Colonic mucosa (tissue), 4 donors: ENCODE measurements at regions of chr17 and their contacts with region 1.

Region 1: GRCh38 chr17:17496189-17497064 is at the start of gene RASD1:
- DNase-seq: peak; percentile 92
- H3K4me3 ChIP-seq: peak within 1 kb of the TSS; percentile 46
- H3K27ac ChIP-seq: peak within 1 kb of the TSS; percentile 10
- H3K4me1 ChIP-seq: peaks cover 14% of the 10 kb centered on the region
- H3K27me3 ChIP-seq: peaks cover 8% of the 10 kb centered on the region
- CTCF ChIP-seq: peak; percentile 97
- total RNA-seq, gene RASD1: 21.6 to 24.9 TPM

Region 2: GRCh38 chr17:17313350-17313991 is 183.0 kb before region 1 on chr17:
- intact Hi-C with region 1: no loop called
- DNase-seq: peak; percentile 59
- H3K4me3 ChIP-seq: no peak overlapping the region
- H3K27ac ChIP-seq: no peak overlapping the region
- H3K4me1 ChIP-seq: no peaks in the 10 kb centered on the region
- H3K27me3 ChIP-seq: no peaks in the 10 kb centered on the region
- CTCF ChIP-seq: peak; percentile 49

Region 3: GRCh38 chr17:17356149-17356930 is 140.1 kb before region 1 on chr17:
- intact Hi-C with region 1: loop called (anchors 5 kb)
- DNase-seq: peak; percentile 76
- H3K4me3 ChIP-seq: no peak overlapping the region
- H3K27ac ChIP-seq: no peak overlapping the region
- H3K4me1 ChIP-seq: no peaks in the 10 kb centered on the region
- H3K27me3 ChIP-seq: no peaks in the 10 kb centered on the region
- CTCF ChIP-seq: peak; percentile 99

Region 4: GRCh38 chr17:17568749-17569195 is 72.3 kb after region 1 on chr17:
- intact Hi-C with region 1: loop called (anchors 2 kb)
- DNase-seq: peak; percentile 90
- H3K4me3 ChIP-seq: no peak overlapping the region
- H3K27ac ChIP-seq: no peak overlapping the region
- H3K4me1 ChIP-seq: peaks cover 11% of the 10 kb centered on the region
- H3K27me3 ChIP-seq: no peaks in the 10 kb centered on the region
- CTCF ChIP-seq: peak; percentile 68

Region 5: GRCh38 chr17:17580662-17581470 is 84.4 kb after region 1 on chr17:
- intact Hi-C with region 1: no loop called
- DNase-seq: no peak
- H3K4me3 ChIP-seq: no peak overlapping the region
- H3K27ac ChIP-seq: no peak overlapping the region
- H3K4me1 ChIP-seq: no peaks in the 10 kb centered on the region
- H3K27me3 ChIP-seq: no peaks in the 10 kb centered on the region
- CTCF ChIP-seq: no peak

Region 6: DNA sequence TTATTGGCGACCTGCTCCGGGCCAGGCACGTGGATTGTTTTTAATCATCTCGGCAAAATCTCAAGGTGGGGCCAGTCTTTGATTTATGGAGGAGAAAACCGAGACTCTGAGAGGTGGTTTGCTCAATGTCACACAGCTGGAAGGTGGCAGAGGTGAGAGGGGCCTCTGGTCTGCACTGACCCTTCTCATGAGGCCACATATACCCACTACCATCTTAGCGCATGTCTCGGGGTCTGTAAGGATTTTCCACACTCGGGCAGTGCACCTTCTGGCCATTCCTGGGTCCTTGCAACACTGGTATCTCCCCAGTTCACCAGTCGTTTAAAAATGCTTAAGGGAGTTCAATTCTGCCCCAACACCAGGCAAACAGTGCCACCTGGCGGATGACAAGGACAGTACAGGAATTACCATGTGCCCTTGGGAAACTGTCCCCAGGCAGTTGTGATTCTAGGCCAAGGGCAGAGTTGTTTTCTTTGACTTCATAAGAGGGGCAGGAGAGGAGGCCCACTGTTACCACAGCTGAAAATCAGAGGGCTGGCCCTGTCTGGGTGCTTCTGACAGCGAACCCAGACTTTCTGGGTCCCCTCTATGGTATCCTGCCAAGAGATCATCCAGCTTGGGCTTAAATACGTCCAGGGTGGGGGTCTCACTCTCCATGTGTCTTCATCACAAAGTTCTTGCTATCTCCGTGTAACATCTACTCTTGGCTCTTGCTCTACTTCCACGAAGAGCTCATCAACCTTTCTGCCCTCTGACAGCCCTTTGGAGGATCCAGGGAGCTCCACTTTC is 145.4 kb after region 1 on chr17:
- intact Hi-C with region 1: loop called (anchors 10 kb)
- DNase-seq: peak; percentile 83
- H3K4me3 ChIP-seq: no peak overlapping the region
- H3K27ac ChIP-seq: no peak overlapping the region
- H3K4me1 ChIP-seq: no peaks in the 10 kb centered on the region
- H3K27me3 ChIP-seq: no peaks in the 10 kb centered on the region
- CTCF ChIP-seq: peak; percentile 89